Ovary (tissue), 10 donors: ENCODE measurements at regions of chr16 and their contacts with region 1.

Region 1: GRCh38 chr16:79601931-79602627 is 1.5 kb upstream of the MAF start:
- DNase-seq: peak; percentile 84 to 91 (median 89)
- H3K4me3 ChIP-seq: peak overlapping the region; percentile 93
- H3K27ac ChIP-seq: peak overlapping the region in 1 of 2 donors; percentile 95
- H3K4me1 ChIP-seq: peaks cover under 1% of the 10 kb centered on the region
- H3K27me3 ChIP-seq: no peaks in the 10 kb centered on the region
- CTCF ChIP-seq: peak; percentile 65 to 78 (median 71)
- EP300 ChIP-seq: no peak
- POLR2A ChIP-seq: no peak

Region 2: DNA sequence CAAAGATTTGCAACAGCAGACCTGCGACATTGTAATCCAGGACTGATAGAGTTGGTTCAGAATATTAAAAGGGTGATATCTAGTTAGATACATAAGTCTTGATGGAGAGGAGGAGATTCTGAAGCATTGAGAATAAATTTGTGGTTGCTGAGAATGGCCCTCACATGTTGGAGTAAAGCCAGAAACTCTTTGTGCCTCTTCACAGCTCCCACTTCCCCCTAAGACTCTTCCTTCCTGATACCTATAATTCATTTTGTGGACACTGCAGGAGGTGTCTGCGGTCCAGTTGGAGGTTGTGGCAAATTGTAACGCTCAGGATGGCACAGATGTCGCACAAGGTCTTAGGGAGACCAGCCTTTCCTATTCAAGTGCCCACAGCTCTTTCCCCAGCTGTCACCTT is 1485.1 kb before region 1 on chr16:
- intact Hi-C with region 1: loop called in 1 of 4 experiments (anchors 10 kb)
- DNase-seq: no peak
- H3K4me3 ChIP-seq: no peak overlapping the region
- H3K27ac ChIP-seq: no peak overlapping the region
- H3K4me1 ChIP-seq: peaks cover 6% of the 10 kb centered on the region
- H3K27me3 ChIP-seq: no peaks in the 10 kb centered on the region
- CTCF ChIP-seq: no peak
- EP300 ChIP-seq: no peak
- POLR2A ChIP-seq: no peak

Region 3: GRCh38 chr16:78503602-78504001 is 1098.5 kb before region 1 on chr16:
- intact Hi-C with region 1: loop called in 3 of 4 experiments (anchors 5 to 10 kb)
- DNase-seq: peak in 3 of 5 donors; percentile 51 to 77 (median 55)
- H3K4me3 ChIP-seq: no peak overlapping the region
- H3K27ac ChIP-seq: no peak overlapping the region
- H3K4me1 ChIP-seq: peaks cover 11% of the 10 kb centered on the region
- H3K27me3 ChIP-seq: no peaks in the 10 kb centered on the region
- CTCF ChIP-seq: peak; percentile 74 to 86 (median 86)
- EP300 ChIP-seq: no peak
- POLR2A ChIP-seq: no peak

Region 4: DNA sequence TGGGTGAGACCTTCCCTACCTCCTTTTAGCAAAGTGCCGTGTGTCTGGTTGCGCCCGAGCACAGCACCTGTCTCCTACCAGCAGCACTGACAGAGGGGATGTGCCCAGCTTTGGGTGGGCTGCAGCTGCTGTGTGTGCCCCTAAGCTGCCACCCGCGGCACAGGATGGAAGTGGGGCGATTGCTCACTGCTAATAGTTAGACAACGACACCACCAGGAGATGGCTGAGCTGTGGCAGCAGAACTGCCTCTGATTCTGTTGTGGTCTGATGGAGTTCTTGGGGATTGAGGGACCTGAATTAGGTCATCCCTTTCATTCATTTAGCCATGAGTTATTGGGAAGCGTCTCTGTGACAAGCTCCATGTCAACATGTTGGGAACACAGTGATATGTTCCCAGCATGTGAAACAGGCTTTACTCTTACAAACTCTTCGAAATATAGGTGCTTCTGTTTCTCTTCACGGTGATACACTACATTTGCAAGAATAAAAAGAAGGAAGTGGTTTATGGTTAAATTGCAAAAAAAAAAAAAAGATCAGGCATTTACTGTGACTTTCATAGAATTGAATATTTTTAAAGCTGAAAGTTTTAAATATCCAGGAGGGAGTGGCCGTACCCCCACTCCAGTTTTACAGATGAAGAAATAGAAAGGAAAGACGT is 186.0 kb before region 1 on chr16:
- intact Hi-C with region 1: loop called in 1 of 4 experiments (anchors 10 kb)
- DNase-seq: no peak
- H3K4me3 ChIP-seq: no peak overlapping the region
- H3K27ac ChIP-seq: no peak overlapping the region
- H3K4me1 ChIP-seq: no peaks in the 10 kb centered on the region
- H3K27me3 ChIP-seq: no peaks in the 10 kb centered on the region
- CTCF ChIP-seq: no peak
- EP300 ChIP-seq: no peak
- POLR2A ChIP-seq: no peak

Region 5: DNA sequence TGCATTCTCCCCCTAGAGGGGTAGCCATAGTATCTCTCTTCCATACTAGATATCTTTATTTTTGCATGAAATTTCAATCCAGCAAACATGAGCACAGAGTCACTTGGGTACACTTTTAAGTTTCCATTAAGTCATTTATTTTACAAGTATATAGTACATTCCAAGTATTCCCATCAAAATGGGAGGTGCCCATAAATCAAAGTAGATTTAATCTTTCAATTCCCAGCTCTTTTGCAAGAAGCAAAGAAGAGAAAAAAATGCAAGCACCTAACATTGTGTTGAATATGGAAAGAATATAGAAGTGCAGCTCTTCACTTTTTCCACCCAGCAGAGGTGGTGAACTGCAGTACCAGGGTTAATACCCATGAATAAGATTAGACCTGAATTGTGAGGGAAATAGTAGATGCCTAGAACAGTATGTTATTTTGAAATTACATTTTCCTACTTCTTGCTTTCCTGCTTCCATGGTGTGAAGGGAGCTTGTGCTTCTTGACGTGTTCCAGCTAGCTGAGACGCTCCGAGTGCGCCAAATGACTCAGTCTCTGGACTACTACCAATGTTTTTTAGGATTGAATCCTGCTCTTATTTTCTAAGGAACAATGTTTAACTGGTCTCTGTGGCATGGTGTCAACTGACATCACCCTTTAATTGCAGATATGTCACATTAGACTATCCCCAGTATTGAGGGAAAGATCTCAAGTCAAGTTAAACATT is 149.5 kb after region 1 on chr16:
- intact Hi-C with region 1: loop called in 1 of 4 experiments (anchors 10 kb)
- DNase-seq: peak; percentile 51 to 77 (median 66)
- H3K4me3 ChIP-seq: no peak overlapping the region
- H3K27ac ChIP-seq: no peak overlapping the region
- H3K4me1 ChIP-seq: peaks cover 4% of the 10 kb centered on the region
- H3K27me3 ChIP-seq: no peaks in the 10 kb centered on the region
- CTCF ChIP-seq: no peak
- EP300 ChIP-seq: no peak
- POLR2A ChIP-seq: no peak

Region 6: GRCh38 chr16:79767421-79768275 is 165.6 kb after region 1 on chr16:
- intact Hi-C with region 1: loop called in 2 of 4 experiments (anchors 5 to 10 kb)
- DNase-seq: peak in 4 of 5 donors; percentile 31 to 41 (median 34)
- H3K4me3 ChIP-seq: peak overlapping the region; percentile 30
- H3K27ac ChIP-seq: peak overlapping the region; percentile 52 to 77
- H3K4me1 ChIP-seq: peaks cover 17% of the 10 kb centered on the region
- H3K27me3 ChIP-seq: no peaks in the 10 kb centered on the region
- CTCF ChIP-seq: no peak
- EP300 ChIP-seq: no peak
- POLR2A ChIP-seq: no peak

Region 7: DNA sequence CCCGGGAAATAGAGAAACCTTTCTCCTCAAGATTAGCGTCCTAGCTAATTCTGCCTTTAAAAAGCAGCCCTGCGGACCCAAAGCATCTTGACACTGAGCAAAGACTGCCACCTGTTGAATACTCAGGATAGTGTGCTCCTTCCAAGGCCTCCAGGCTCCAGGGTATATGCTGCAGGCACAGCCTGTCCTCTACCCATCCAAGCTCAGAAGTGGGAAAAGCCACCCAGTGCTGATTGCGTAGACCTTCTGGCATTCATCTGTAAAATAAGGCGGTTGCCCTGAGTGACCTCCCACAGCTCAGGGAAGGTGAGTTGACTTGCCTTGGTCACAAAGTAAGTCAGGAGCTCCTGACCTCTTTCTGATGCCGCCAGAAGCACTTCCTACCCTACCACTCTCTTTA is 482.6 kb after region 1 on chr16:
- intact Hi-C with region 1: loop called in 3 of 4 experiments (anchors 5 to 10 kb)
- DNase-seq: peak; percentile 59 to 73 (median 64)
- H3K4me3 ChIP-seq: no peak overlapping the region
- H3K27ac ChIP-seq: no peak overlapping the region
- H3K4me1 ChIP-seq: peaks cover 1% of the 10 kb centered on the region
- H3K27me3 ChIP-seq: no peaks in the 10 kb centered on the region
- CTCF ChIP-seq: peak; percentile 64 to 71 (median 66)
- EP300 ChIP-seq: no peak
- POLR2A ChIP-seq: no peak